Spleen (tissue), 13 donors: ENCODE measurements at regions of chr11 and their contacts with region 1.

Region 1: GRCh38 chr11:27362749-27363575 is at the start of gene CCDC34:
- DNase-seq: peak; percentile 96
- H3K4me3 ChIP-seq: peak within 1 kb of the TSS; percentile 71 to 93 (median 78)
- H3K27ac ChIP-seq: peak within 1 kb of the TSS in 6 of 8 donors; percentile 33 to 71 (median 60)
- H3K4me1 ChIP-seq: peaks cover 7 to 36% (median 22%) of the 10 kb centered on the region in 6 donors
- H3K27me3 ChIP-seq: no peaks in the 10 kb centered on the region
- CTCF ChIP-seq: peak in 1 of 11 experiments; percentile 10
- POLR2A ChIP-seq: no peak
- total RNA-seq, gene CCDC34: 2.2 to 4.9 (median 3.0) TPM

Region 2: GRCh38 chr11:27472398-27473016 is 109.5 kb after region 1 on chr11 and contains the start of gene LGR4:
- intact Hi-C with region 1: loop called (anchors 10 kb)
- DNase-seq: peak; percentile 92
- H3K4me3 ChIP-seq: peak within 1 kb of the TSS; percentile 69 to 94 (median 80)
- H3K27ac ChIP-seq: peak within 1 kb of the TSS; percentile 57 to 89 (median 86)
- H3K4me1 ChIP-seq: peaks cover 2 to 53% (median 30%) of the 10 kb centered on the region in 6 donors
- H3K27me3 ChIP-seq: peaks cover 0 to 19% (median 0%) of the 10 kb centered on the region in 7 donors
- CTCF ChIP-seq: no peak
- POLR2A ChIP-seq: peak in 2 of 3 donors; percentile 6 to 87
- total RNA-seq, gene LGR4: 12.3 to 47.2 (median 33.8) TPM